Activated naive CD4-positive, alpha-beta T cell treated with anti-CD3 and anti-CD28 coated beads for 36 hours (primary cell): ENCODE measurements at regions of chr7 and their contacts with region 1.

Region 1: GRCh38 chr7:91880413-91881241 is at the start of gene MTERF1:
- DNase-seq: peak; percentile 96
- H3K4me3 Mint-ChIP-seq: peak within 1 kb of the TSS; percentile 95
- H3K27ac Mint-ChIP-seq: peak within 1 kb of the TSS; percentile 94
- H3K4me1 Mint-ChIP-seq: peaks cover 21% of the 10 kb centered on the region
- H3K27me3 Mint-ChIP-seq: no peaks in the 10 kb centered on the region
- total RNA-seq, gene MTERF1: 13.7 to 16.7 TPM

Region 2: GRCh38 chr7:90403174-90404113 is 1477.2 kb before region 1 on chr7 and contains the start of gene CLDN12:
- CTCF ChIA-PET with region 1: no interaction called
- intact Hi-C with region 1: loop called (anchors 5 kb)
- DNase-seq: peak; percentile 95
- H3K4me3 Mint-ChIP-seq: peak within 1 kb of the TSS; percentile 95
- H3K27ac Mint-ChIP-seq: peak within 1 kb of the TSS; percentile 97
- H3K4me1 Mint-ChIP-seq: peaks cover 4% of the 10 kb centered on the region
- H3K27me3 Mint-ChIP-seq: no peaks in the 10 kb centered on the region
- total RNA-seq, gene CLDN12: 14.8 to 15.3 TPM

Region 3: DNA sequence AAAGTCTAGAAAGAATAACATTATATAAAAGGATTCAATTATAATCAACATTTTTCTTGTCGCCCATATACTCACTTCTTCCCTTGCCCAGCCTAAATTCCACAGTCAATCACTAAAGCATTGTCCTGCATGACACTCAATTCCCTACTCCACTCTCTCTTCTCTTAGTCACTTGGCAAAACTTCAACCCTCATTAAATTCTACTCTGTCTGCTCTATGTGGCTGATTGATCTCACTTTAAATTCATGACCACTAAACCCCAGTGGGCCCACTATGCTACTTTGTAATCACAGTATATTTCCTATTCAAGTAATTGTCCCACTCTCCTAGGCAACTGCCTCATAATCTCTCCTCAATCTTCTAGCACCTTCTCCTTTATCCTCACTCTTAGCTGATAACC is 54.2 kb before region 1 on chr7:
- CTCF ChIA-PET with region 1: interaction called, 17 read pairs
- intact Hi-C with region 1: loop called (anchors 1 kb)
- DNase-seq: no peak
- H3K4me3 Mint-ChIP-seq: no peak overlapping the region
- H3K27ac Mint-ChIP-seq: no peak overlapping the region
- H3K4me1 Mint-ChIP-seq: no peaks in the 10 kb centered on the region
- H3K27me3 Mint-ChIP-seq: no peaks in the 10 kb centered on the region

Region 4: DNA sequence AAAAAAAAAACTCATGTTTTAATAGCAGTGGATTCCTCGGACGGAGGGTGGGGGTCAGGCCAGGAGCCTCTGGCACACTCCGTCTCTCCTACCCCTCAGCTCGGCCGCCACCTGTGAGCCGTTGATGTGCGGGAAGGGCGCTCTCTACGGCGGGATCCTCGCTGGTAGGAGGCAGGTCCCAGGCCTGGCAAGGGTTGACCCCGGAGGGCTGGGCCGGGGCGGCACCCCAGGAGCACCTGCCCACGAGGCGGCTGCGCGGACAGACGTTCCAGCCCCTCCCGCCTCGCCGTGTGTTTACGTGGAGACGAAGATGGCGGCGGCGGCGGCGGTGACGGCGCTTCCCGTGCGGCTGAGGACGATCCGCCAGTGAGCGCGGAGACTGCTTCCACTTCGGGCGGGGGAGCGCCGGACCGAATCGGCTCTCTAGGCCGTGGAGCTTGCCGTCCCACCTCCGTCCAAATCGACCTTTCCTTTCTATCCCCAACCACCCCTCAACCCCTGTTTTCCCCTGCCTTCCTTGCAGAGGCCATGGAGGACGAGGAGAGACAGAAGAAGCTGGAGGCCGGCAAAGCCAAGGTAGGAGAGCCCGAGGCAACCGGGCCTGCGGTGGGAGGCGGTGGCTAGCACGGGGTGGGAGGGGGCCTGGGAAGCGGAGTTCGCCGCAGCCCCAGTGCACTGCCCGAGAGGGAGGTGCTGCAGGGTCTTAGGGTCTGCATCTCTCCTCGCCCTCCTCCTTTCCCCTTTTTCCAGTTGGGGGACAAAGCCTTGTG is 60.1 kb after region 1 on chr7 and contains the start of gene AKAP9:
- CTCF ChIA-PET with region 1: interaction called, 16 read pairs
- intact Hi-C with region 1: loop called (anchors 1 kb)
- DNase-seq: peak; percentile 91
- H3K4me3 Mint-ChIP-seq: peak within 1 kb of the TSS; percentile 90
- H3K27ac Mint-ChIP-seq: peak within 1 kb of the TSS; percentile 94
- H3K4me1 Mint-ChIP-seq: peaks cover 29% of the 10 kb centered on the region
- H3K27me3 Mint-ChIP-seq: no peaks in the 10 kb centered on the region
- total RNA-seq, gene AKAP9: 20.0 to 26.2 TPM

Region 5: DNA sequence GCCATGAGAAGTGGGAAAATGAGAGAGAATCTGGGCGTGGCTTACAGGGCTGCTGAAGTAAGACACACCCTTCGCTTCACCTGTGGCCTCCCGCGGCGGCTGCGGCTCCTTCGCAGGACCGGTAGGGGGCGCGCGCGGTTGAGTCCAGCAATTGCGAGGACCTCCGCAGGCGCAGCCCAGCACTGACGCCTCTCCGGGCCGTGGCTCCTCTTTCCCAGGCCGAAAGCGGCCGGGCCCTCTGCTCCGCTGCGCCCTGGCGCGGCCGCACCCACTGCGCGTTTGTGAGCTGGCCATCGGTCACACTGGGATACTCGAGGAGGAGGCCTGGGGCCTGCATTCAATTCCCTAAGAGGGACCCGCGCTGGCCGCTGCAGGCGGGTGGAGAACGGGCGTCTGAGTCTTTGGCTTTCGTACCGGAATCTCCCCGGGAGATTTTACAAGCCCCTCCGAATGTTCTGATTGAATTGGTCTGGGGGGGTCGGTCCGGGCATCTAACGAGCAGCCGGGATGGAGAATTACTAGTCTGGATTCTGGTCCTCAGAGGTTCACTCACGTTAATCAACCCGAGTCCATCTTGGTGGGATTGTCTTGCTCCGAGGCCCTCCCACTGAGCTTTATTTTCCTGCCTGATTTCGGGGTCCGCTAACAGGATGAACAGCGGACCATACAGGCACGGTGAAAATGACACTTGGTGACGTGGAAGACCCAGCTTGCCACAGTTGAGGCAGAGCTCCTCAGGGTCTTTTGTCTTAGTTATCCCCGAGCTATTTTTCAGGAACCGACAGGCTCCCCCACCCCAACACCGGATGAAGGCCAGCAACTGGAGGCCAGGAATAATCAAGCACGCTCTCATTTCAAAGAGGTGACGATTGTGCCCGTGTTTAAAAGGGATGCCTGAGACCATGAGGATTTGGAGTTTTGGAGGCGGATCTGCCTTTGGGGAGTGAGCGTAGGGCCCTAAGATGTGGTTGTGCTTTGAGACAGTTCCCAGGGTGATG is 298.6 kb after region 1 on chr7 and contains the start of gene LRRD1:
- CTCF ChIA-PET with region 1: no interaction called
- intact Hi-C with region 1: loop called (anchors 1 kb)
- DNase-seq: peak; percentile 94
- H3K4me3 Mint-ChIP-seq: peak within 1 kb of the TSS; percentile 72
- H3K27ac Mint-ChIP-seq: no peak within 1 kb of the TSS
- H3K4me1 Mint-ChIP-seq: peaks cover 10% of the 10 kb centered on the region
- H3K27me3 Mint-ChIP-seq: peaks cover 3% of the 10 kb centered on the region
- total RNA-seq, gene LRRD1: not detected

Region 6: GRCh38 chr7:92461027-92462003 is 580.7 kb after region 1 on chr7:
- CTCF ChIA-PET with region 1: no interaction called
- intact Hi-C with region 1: loop called (anchors 5 kb)
- DNase-seq: peak; percentile 53
- H3K4me3 Mint-ChIP-seq: no peak overlapping the region
- H3K27ac Mint-ChIP-seq: no peak overlapping the region
- H3K4me1 Mint-ChIP-seq: no peaks in the 10 kb centered on the region
- H3K27me3 Mint-ChIP-seq: no peaks in the 10 kb centered on the region